ENCODE measurements at regions of chr6 and their contacts with region 1.

Region 1: GRCh38 chr6:84428300-84428907 is 201.0 kb upstream of the CEP162 start:
- H3K4me3 ChIP-seq: no peak overlapping the region
- H3K27ac ChIP-seq: no peak overlapping the region
- H3K4me1 ChIP-seq: peaks cover 11% of the 10 kb centered on the region
- CTCF ChIP-seq: no peak; the same call in 1 of the 2 replicates

Region 2: GRCh38 chr6:84361372-84362192 is 66.8 kb before region 1 on chr6:
- CTCF ChIA-PET with region 1: no interaction called
- POLR2A ChIA-PET with region 1: no interaction called
- H3K4me3 ChIP-seq: no peak overlapping the region
- H3K27ac ChIP-seq: no peak overlapping the region
- H3K4me1 ChIP-seq: peaks cover 2% of the 10 kb centered on the region; the same call in 1 of the 2 replicates
- CTCF ChIP-seq: no peak

Region 3: DNA sequence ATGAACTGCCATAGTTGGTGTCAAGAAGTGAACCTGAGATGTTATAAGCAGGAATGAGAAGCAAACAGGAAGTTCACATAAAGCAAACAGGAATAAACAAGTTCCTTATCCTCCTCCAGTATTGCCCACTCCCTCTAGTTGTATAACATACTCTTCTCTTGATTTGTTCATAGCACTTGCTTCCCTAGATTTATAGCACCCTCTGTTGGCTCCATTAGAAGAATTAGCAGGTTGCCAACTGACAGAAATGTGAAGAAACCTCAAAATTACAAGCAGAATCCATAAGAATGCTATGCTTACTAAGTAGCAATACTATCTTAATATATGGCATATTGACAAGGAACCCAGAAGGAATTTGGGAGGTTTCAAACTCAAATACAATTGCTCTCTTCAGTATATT is 140.6 kb after region 1 on chr6:
- CTCF ChIA-PET with region 1: interaction called, 12 read pairs
- POLR2A ChIA-PET with region 1: no interaction called
- H3K4me3 ChIP-seq: no peak overlapping the region
- H3K27ac ChIP-seq: no peak overlapping the region
- H3K4me1 ChIP-seq: no peaks in the 10 kb centered on the region
- CTCF ChIP-seq: peak; percentile 33; the same call in 1 of the 2 replicates